ENCODE measurements at regions of chr9 and their contacts with region 1.

Region 1: GRCh38 chr9:133184962-133185361 is 21.2 kb upstream of the GBGT1 start:
- DNase-seq: no peak
- ATAC-seq: peak; percentile 75 to 82
- H3K4me3 ChIP-seq: no peak overlapping the region
- H3K27ac ChIP-seq: no peak overlapping the region
- H3K4me1 ChIP-seq: no peaks in the 10 kb centered on the region
- H3K27me3 ChIP-seq: no peaks in the 10 kb centered on the region

Region 2: DNA sequence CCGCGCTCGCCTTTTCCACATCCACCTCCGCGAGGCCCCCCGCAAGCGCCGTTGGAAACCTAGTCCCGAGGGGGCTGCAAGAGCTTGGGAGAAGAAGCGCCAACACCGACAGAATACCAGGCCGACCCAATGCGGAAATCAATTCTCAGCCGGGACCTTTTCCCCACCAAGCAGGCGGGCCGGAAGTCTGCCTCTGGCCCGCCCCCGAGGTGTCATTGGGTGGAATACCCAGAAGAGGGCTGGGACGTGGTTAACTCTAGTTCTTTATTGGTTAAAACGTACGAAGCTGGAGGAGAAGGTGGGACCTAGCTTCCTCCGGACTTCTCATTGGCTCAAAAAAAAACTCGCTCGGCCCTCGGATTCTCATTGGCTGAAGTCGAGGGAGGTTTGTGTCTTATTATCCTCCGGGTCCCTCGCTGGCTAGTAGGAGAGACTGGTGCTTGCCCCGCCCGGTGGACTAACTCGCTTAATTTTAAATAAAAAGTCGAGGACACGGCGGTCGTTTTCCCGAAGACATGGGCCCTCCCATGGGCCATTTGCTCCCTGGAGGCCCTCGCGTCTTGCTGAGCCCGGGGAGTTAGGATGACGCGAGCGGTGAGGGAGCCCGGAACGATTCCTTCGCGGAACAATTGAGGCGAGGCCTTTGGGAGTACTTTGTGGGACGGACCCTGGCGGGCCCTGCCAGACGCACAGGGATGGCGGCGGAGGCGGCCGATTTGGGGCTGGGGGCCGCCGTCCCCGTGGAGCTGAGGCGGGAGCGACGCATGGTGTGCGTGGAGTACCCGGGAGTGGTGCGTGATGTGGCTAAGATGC is 154.4 kb before region 1 on chr9 and contains the start of gene GTF3C5:
- intact Hi-C with region 1: no loop called
- DNase-seq: peak; percentile 92 to 96 (median 96)
- ATAC-seq: peak; percentile 99
- H3K4me3 ChIP-seq: peak within 1 kb of the TSS; percentile 63
- H3K27ac ChIP-seq: peak within 1 kb of the TSS; percentile 91
- H3K4me1 ChIP-seq: peaks cover 5% of the 10 kb centered on the region
- H3K27me3 ChIP-seq: no peaks in the 10 kb centered on the region
- total RNA-seq, gene GTF3C5: 28.9 to 41.1 (median 32.4) TPM

Region 3: GRCh38 chr9:133320421-133320881 is 135.5 kb after region 1 on chr9:
- intact Hi-C with region 1: loop called in 3 of 4 experiments (anchors 5 to 10 kb)
- DNase-seq: no peak
- ATAC-seq: no peak
- H3K4me3 ChIP-seq: no peak overlapping the region
- H3K27ac ChIP-seq: no peak overlapping the region
- H3K4me1 ChIP-seq: no peaks in the 10 kb centered on the region
- H3K27me3 ChIP-seq: no peaks in the 10 kb centered on the region

Region 4: DNA sequence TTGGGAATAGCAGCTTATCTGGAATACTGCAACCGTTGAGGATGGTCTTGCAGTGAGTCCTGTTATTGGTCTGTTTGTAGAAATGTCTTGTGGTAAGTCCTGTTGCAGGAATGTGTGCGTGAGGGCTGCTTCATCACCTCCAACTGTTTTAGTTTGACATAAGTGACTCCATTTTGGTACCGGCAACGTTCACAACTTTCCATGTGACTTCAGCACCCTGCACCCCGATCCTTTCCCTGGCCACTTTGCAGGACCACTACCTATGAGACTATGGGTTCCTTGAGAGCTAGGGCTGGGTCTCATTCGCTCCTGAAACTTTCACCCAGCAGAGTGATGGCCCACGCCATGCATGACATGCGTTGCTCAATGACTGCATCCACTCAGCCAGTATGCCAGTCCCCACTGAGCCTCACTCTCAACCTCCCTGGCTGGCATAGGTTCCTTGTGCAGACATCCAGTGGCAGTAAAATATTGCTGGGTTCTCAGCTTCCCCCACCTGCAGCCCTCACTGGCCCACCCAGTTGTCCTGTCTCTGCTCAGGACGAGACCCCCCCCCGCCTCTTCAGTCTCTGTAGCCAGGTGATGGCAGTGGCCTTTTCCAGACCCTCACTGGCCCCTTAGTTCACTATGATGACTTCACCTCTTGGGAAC is 143.0 kb after region 1 on chr9:
- intact Hi-C with region 1: loop called (anchors 5 to 10 kb)
- DNase-seq: no peak
- ATAC-seq: peak in 1 of 2 donors; percentile 22
- H3K4me3 ChIP-seq: no peak overlapping the region
- H3K27ac ChIP-seq: no peak overlapping the region
- H3K4me1 ChIP-seq: no peaks in the 10 kb centered on the region
- H3K27me3 ChIP-seq: no peaks in the 10 kb centered on the region

Region 5: DNA sequence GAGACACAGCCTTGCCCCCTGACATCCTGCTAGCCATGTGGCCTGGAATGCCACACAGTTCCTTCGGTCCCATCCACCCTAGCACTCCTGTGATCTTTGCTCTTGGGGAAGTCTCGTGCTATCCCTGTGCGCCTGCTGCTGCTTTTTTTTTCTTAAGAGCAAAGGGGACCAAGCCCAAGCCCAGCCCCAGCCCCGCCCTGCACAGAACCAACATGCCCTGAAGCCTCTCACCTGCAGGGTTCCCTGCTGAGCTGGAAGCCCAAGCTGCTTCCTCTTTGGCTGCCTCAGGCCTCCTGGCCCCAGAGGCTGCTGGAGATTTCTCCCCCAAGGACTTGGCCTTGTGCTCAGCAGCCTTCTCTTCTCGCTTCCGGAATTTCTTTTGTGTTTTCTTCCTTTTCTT is 149.2 kb after region 1 on chr9:
- intact Hi-C with region 1: loop called (anchors 5 to 10 kb)
- DNase-seq: no peak
- ATAC-seq: no peak
- H3K4me3 ChIP-seq: no peak overlapping the region
- H3K27ac ChIP-seq: no peak overlapping the region
- H3K4me1 ChIP-seq: peaks cover 3% of the 10 kb centered on the region
- H3K27me3 ChIP-seq: no peaks in the 10 kb centered on the region

Region 6: DNA sequence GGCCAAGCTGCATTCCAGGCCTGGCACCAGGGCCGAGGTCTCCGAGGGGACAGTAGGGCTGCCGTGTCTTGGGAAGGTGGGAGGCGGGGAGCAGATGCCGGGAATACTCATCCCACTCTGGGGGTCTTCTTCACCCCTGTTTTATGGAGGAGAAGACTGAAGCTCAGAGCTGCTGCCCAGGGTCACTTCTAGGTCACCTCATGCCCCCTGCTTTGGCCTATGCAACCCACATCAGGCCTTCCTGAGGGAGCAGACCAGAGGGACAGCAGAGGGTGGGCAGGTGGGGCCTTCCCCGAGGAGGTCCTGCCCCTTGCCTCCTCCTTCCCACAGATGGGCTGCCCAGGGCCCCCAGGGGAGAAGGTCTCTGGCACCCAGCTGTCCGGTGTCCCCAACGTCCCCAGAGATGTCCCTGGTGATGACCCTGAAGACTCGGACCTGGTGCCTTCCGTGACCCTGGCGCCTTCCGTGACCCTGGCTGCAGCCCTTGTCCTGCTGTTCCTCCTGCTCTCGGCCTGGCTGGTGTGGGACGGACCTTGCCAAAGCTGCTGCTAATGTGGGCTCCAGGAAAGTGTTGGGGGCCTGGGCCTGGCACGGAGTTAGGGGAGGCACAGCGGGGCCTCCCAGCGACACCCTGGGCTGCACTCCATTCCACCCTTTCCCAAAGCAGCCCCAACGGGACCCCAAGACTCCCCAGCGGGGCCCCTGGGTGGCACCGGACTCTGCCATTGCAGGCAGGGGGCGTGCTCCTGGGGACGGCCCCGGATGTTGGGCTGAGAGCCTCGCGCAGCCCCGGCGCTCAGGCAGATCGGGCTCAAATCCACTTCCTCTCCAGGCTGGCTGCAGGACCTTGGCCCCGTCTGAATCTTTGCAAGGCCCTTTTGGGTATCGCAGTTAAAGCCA is 300.6 kb after region 1 on chr9:
- intact Hi-C with region 1: loop called (anchors 5 to 10 kb)
- DNase-seq: peak; percentile 13 to 54 (median 53)
- ATAC-seq: peak; percentile 4
- H3K4me3 ChIP-seq: no peak overlapping the region
- H3K27ac ChIP-seq: no peak overlapping the region
- H3K4me1 ChIP-seq: no peaks in the 10 kb centered on the region
- H3K27me3 ChIP-seq: no peaks in the 10 kb centered on the region

Measured in right cardiac atrium (tissue), 5 donors.